H1 (cell line): ENCODE measurements at regions of chr4 and their contacts with region 1.

Region 1: DNA sequence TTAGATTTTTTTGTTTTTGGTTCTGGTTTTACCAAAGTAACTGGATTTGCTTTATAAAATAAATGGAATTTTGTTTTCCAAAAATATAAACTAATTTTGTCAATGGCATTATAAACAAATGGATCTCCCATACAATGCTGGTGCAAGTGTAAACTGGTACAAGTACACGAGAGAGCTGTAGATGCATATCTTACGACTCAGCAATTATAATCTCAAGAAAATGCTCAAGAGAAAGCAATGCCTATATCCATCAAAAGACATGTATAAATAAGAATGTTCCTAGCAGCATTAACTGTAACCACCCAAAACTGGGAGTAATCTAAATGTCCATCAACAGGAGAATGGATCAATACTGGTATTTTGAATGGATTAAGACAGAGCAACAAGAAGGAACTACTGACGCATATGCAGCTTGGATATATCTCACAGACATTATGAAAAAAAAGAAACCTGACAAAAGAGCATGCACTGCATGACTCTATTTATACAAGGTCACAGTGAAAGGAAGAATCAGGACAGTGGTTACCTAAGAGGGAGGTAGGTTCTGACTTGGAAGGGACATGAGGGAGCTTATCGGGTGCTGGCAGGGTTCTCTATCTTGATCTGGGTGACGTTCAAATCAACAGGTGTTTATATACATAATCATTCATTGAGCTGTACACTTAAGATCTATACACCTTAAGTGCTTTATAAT is 9.5 kb downstream of the ADH5 start:
- DNase-seq: no peak
- H3K4me3 ChIP-seq: no peak overlapping the region
- H3K27ac ChIP-seq: no peak overlapping the region
- H3K4me1 ChIP-seq: no peaks in the 10 kb centered on the region
- H3K27me3 ChIP-seq: no peaks in the 10 kb centered on the region
- CTCF ChIP-seq: no peak
- EP300 ChIP-seq: no peak
- POLR2A ChIP-seq: no peak
- RAD21 ChIP-seq: no peak

Region 2: GRCh38 chr4:99028187-99028586 is 50.9 kb before region 1 on chr4:
- CTCF ChIA-PET with region 1: no interaction called
- POLR2A ChIA-PET with region 1: no interaction called
- DNase-seq: no peak
- H3K4me3 ChIP-seq: no peak overlapping the region
- H3K27ac ChIP-seq: no peak overlapping the region
- H3K4me1 ChIP-seq: peaks cover 0 to 12% (median 5%) of the 10 kb centered on the region in 4 experiments; a peak in 3 of 7 replicates
- H3K27me3 ChIP-seq: no peaks in the 10 kb centered on the region
- CTCF ChIP-seq: no peak
- EP300 ChIP-seq: no peak
- POLR2A ChIP-seq: no peak
- RAD21 ChIP-seq: no peak

Region 3: GRCh38 chr4:99067617-99068016 is 11.5 kb before region 1 on chr4:
- CTCF ChIA-PET with region 1: interaction called, 3 read pairs
- POLR2A ChIA-PET with region 1: interaction called, 17 read pairs
- DNase-seq: no peak
- H3K4me3 ChIP-seq: no peak overlapping the region
- H3K27ac ChIP-seq: no peak overlapping the region
- H3K4me1 ChIP-seq: no peaks in the 10 kb centered on the region
- H3K27me3 ChIP-seq: no peaks in the 10 kb centered on the region
- CTCF ChIP-seq: no peak
- EP300 ChIP-seq: no peak
- POLR2A ChIP-seq: no peak
- RAD21 ChIP-seq: no peak

Region 4: DNA sequence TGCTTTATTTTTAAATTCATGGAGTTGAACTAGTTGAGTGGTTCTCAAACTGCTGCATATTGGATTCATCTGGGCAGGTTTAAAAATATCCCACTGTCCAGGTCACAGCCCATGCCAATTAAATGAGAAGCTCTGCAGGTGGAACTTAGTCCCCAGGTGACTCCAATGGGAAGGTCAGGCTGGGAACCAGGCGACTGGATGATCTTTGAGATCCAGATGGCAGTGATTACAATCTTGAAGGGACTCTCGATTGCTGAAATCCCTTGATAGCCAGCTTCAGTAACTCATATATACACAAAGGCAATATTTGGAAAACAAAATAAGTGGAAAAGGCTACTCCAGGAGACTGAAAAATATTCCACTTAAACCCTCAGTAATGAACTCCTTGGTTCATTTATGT is 203.7 kb after region 1 on chr4:
- CTCF ChIA-PET with region 1: no interaction called
- POLR2A ChIA-PET with region 1: no interaction called
- DNase-seq: no peak
- H3K4me3 ChIP-seq: no peak overlapping the region
- H3K27ac ChIP-seq: no peak overlapping the region
- H3K4me1 ChIP-seq: no peaks in the 10 kb centered on the region
- H3K27me3 ChIP-seq: no peaks in the 10 kb centered on the region
- CTCF ChIP-seq: no peak
- EP300 ChIP-seq: no peak
- POLR2A ChIP-seq: no peak
- RAD21 ChIP-seq: no peak